ENCODE measurements at regions of chr2 and their contacts with region 1.

Region 1: GRCh38 chr2:217886720-217887309 is 116.0 kb downstream of the TNS1 start:
- DNase-seq: peak; percentile 79
- ATAC-seq: peak; percentile 76
- H3K4me3 ChIP-seq: no peak overlapping the region
- H3K4me3 Mint-ChIP-seq: peak overlapping the region; percentile 4
- H3K27ac ChIP-seq: no peak overlapping the region
- H3K27ac Mint-ChIP-seq: no peak overlapping the region
- H3K4me1 ChIP-seq: peaks cover 12 to 15% of the 10 kb centered on the region in 2 donors
- H3K4me1 Mint-ChIP-seq: peaks cover 27% of the 10 kb centered on the region
- H3K27me3 ChIP-seq: no peaks in the 10 kb centered on the region
- H3K27me3 Mint-ChIP-seq: no peaks in the 10 kb centered on the region
- CTCF ChIP-seq: peak; percentile 76

Region 2: GRCh38 chr2:217836901-217837491 is 49.8 kb before region 1 on chr2:
- CTCF ChIA-PET with region 1: interaction called, 14 read pairs
- POLR2A ChIA-PET with region 1: no interaction called
- intact Hi-C with region 1: no loop called
- DNase-seq: no peak
- ATAC-seq: no peak
- H3K4me3 ChIP-seq: no peak overlapping the region
- H3K4me3 Mint-ChIP-seq: no peak overlapping the region
- H3K27ac ChIP-seq: no peak overlapping the region
- H3K27ac Mint-ChIP-seq: no peak overlapping the region
- H3K4me1 ChIP-seq: no peaks in the 10 kb centered on the region
- H3K4me1 Mint-ChIP-seq: no peaks in the 10 kb centered on the region
- H3K27me3 ChIP-seq: peaks cover 0 to 3% (median 0%) of the 10 kb centered on the region in 4 experiments
- H3K27me3 Mint-ChIP-seq: peaks cover 10% of the 10 kb centered on the region
- CTCF ChIP-seq: no peak

Region 3: DNA sequence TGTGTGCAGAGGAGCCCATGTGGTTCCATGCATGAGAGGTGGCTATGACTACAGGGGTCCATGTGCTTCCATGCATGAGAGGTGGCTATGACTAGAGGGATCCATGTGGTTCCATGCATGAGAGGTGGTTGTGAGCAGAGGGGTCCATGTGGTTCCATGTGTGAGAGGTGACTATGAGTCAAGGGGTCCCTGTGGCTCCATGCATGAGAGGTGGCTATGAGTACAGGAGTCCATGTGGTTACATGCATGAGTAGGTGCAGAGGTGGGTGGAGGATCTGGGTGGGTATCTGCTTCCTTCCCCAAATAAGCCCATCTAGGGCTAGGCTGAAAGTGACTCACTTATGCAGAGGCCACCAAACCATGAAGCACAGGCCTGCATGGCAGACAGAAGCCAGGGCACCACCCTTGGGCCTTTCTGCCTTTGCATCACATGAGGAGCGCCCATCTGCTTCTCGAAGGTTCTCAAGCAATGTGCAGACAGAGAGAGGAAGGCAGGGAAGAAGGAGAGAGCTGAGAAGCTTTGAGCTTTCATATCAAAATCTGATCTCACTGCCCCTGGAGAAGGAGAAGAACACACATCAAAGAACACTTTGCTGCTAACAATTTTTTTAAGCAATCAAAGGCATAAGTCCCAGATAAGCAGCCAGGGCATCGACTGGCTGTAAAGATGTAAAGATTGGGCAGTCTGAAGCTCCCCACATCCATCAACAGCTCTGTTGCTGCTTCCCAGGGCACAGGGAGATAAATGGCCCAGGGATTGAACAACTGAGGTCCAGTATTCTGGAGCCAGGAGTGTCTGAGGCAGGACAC is 21.6 kb before region 1 on chr2:
- CTCF ChIA-PET with region 1: interaction called, 11 read pairs
- POLR2A ChIA-PET with region 1: no interaction called
- intact Hi-C with region 1: no loop called
- DNase-seq: peak; percentile 84
- ATAC-seq: peak; percentile 91
- H3K4me3 ChIP-seq: peak overlapping the region in 1 of 5 experiments; percentile 9
- H3K4me3 Mint-ChIP-seq: peak overlapping the region; percentile 64
- H3K27ac ChIP-seq: peak overlapping the region; percentile 63 to 77
- H3K27ac Mint-ChIP-seq: peak overlapping the region; percentile 88
- H3K4me1 ChIP-seq: peaks cover 42 to 45% of the 10 kb centered on the region in 2 donors
- H3K4me1 Mint-ChIP-seq: peaks cover 62% of the 10 kb centered on the region
- H3K27me3 ChIP-seq: no peaks in the 10 kb centered on the region
- H3K27me3 Mint-ChIP-seq: peaks cover 2% of the 10 kb centered on the region
- CTCF ChIP-seq: no peak

Region 4: DNA sequence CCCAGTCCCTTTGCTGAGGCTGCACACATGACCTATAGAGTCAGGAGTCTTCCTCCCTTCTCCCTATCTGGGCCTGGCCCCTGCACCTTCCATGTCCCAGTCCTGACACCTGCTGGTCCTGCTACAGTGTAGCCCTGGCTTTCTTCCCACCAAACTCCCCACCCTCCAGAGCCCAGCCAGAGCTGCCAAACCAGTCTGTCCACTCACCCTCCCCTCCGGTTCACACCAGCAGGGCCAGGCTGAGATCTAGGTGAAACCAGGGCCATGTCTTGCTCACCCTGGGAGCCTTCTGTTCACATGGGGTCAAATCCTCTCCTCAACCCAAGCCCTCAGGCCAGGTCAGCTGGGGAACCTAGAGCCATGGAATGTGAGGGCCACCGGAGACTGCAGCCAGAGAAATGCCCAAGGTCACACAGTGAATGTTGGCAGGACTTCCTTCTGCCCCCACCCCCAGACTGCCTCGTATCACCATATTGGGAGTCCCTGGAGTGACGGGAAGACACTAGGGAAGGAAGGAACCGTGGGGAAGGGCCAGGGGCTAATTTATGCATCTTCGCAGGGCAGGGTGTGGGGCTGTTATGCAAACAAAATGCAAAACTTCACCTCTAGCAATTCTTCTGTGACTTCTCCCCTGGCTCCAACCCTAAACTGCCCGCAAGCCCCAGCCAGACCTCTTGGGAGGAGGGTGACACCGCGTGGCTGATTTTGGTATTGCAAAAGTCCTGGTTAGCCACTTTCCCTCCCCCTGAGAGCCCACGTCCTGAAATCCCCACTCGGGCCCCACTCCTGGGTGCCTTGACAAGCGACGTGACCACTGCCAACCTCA is 101.4 kb after region 1 on chr2:
- CTCF ChIA-PET with region 1: interaction called, 9 read pairs
- POLR2A ChIA-PET with region 1: no interaction called
- intact Hi-C with region 1: loop called (anchors 5 kb)
- DNase-seq: peak; percentile 73
- ATAC-seq: peak; percentile 67
- H3K4me3 ChIP-seq: no peak overlapping the region
- H3K4me3 Mint-ChIP-seq: no peak overlapping the region
- H3K27ac ChIP-seq: no peak overlapping the region
- H3K27ac Mint-ChIP-seq: no peak overlapping the region
- H3K4me1 ChIP-seq: no peaks in the 10 kb centered on the region
- H3K4me1 Mint-ChIP-seq: no peaks in the 10 kb centered on the region
- H3K27me3 ChIP-seq: no peaks in the 10 kb centered on the region
- H3K27me3 Mint-ChIP-seq: peaks cover 18% of the 10 kb centered on the region
- CTCF ChIP-seq: peak; percentile 85